ENCODE measurements at regions of chr13 and their contacts with region 1.

Region 1: GRCh38 chr13:27826379-27827353 is 34.4 kb downstream of the GSX1 start:
- DNase-seq: peak; percentile 64
- ATAC-seq: peak; percentile 96
- H3K4me3 ChIP-seq: peak overlapping the region; percentile 23 to 50
- H3K27ac ChIP-seq: 0 out of 2 replicates have a peak overlapping the region, but pooled peaks have one; percentile 2
- H3K4me1 ChIP-seq: peaks cover 6% of the 10 kb centered on the region
- H3K27me3 ChIP-seq: 0 out of 2 replicates have a peak, but pooled peaks cover 3% of the 10 kb centered on the region
- CTCF ChIP-seq: peak; percentile 89

Region 2: DNA sequence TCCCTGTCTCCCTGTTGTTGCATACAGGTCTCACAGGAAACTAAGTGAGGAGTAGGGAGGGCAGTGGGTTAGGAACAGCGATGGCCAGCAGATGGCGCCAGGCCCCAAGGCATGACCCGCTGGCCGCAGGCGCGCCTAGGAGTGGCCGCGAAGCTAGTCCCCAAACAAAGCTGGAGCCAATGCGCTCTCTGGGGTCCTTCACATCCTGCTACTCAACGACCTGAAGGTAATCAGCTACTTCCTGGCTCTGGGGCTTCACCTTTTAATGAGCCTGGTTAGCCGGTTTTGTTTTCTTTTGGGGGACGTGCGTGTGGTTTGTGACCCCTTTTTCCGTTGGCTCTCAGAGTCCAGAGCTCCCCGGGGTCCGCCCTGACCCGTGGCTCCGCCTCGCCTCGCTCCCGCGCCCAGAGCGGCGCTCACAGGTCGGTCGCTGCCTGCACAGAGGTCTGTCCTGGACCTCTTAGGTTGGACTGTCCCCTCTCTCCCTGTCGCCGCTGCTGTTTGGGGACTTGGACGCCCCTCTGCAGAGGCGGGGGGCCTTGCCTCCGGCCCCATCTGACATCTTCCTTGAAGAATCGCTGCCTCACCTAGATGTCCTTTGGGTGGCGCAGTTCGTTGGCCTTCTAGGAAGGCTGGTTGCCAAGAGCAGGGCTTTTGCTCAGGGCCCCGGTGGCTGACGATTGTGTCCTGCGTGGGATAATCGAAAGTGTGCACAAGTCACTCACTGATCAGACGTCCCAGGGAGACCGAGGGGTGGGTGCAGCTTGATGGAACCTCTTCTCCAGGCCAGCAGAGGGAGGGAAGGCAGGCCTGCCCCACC is 464.4 kb before region 1 on chr13:
- CTCF ChIA-PET with region 1: interaction called, 20 read pairs
- POLR2A ChIA-PET with region 1: no interaction called
- in situ Hi-C with region 1: no loop called
- intact Hi-C with region 1: no loop called
- DNase-seq: no peak
- ATAC-seq: peak; percentile 95
- H3K4me3 ChIP-seq: peak overlapping the region; percentile 50 to 77
- H3K27ac ChIP-seq: peak overlapping the region; percentile 68
- H3K4me1 ChIP-seq: peaks cover 28% of the 10 kb centered on the region
- H3K27me3 ChIP-seq: no peaks in the 10 kb centered on the region
- CTCF ChIP-seq: peak; percentile 91

Region 3: DNA sequence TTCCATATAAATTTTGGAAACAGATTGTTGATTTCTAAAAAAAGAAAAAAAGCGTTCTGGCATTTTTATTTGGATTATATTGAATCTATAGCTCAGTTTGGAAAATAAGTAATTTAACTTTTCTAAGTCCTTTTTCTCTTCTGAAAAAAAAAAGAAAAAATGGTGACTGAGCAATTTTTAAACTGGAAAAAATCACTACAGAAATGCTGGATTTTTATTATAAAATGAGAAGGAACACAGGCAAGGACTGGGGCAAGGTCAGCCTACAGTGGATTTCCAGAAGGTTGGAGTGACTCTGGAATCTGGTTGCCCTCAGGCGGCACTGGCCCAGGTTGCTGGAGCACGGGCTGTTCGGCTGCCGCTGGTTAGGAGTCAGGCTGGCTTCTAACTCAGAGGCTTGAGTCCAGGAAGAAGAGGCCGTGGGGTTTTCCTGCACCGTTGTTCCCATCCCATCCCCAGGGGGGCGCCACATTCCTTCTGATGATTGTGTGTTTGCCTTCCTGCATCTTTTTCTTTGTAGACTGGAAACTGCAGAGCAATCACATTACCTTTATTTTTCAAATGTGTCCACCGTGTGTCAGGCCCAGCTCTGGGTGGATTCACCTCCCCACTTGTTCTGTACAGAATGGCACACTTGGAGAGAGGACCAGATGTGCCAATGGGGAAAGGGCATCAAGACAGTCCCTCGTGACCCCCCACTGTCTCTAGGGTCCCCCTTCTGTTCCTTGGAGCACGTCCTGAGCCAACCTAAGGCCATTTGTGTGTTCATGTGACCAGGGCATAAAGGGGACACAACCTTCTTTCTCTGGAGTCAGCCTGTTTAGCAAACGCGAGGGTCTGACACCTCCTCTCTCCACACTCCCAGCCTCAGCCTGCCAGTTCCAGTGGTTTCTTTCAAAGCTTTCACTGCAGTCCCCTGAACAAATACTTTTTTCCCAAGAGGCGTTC is 446.7 kb before region 1 on chr13:
- CTCF ChIA-PET with region 1: no interaction called
- POLR2A ChIA-PET with region 1: no interaction called
- in situ Hi-C with region 1: no loop called
- intact Hi-C with region 1: loop called (anchors 5 kb)
- DNase-seq: no peak
- ATAC-seq: peak; percentile 77
- H3K4me3 ChIP-seq: no peak overlapping the region
- H3K27ac ChIP-seq: no peak overlapping the region
- H3K4me1 ChIP-seq: no peaks in the 10 kb centered on the region; the same call in 1 of the 2 replicates
- H3K27me3 ChIP-seq: no peaks in the 10 kb centered on the region
- CTCF ChIP-seq: peak; percentile 80

Region 4: DNA sequence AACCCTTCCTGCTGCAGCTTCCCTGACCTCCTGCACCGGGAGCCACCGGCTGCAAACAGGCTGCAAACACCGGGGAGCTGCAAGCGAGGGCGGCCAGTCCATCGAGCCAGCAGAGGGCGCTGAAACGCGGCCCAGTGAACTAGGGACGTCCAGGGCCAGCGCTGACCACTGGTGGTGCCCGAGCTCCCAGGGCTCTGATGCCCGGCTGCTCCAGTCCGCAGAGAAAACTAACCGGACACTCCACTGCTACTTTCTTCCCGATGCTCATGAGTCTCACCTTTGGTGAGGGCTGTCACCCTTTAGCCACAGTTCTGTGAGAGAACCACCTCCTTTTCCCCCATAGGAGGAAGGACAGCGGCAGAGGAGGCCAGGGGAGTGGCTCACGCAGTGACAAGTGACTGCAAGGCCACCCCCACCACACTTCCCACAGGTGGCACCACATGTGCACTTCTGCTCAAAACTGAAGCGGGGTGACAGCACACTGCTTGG is 293.5 kb before region 1 on chr13:
- CTCF ChIA-PET with region 1: interaction called, 8 read pairs
- POLR2A ChIA-PET with region 1: no interaction called
- in situ Hi-C with region 1: no loop called
- intact Hi-C with region 1: loop called (anchors 5 kb)
- DNase-seq: peak; percentile 20
- ATAC-seq: peak; percentile 99
- H3K4me3 ChIP-seq: peak overlapping the region; percentile 23 to 54; a peak in 3 of 4 replicates
- H3K27ac ChIP-seq: no peak overlapping the region
- H3K4me1 ChIP-seq: peaks cover 3% of the 10 kb centered on the region; the same call in 1 of the 2 replicates
- H3K27me3 ChIP-seq: no peaks in the 10 kb centered on the region
- CTCF ChIP-seq: peak; percentile 92

Region 5: DNA sequence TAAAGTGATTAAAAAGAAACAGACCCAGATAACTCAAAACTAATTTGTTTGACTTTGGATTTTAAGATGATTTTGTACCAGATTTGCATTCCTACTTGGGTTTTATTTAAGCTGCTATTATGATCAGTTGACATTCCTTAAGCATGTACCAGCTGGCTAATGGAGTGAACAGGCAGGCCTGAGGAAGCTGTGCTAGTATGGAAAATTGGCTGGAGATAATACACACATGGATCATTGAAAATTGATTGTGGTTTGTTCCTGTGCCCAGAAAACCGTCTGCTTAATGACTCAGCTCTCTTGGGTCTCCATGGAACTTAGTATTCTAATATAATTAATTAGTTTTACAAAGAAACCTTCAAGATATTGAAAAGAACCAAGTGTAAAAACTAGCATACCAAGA is 182.4 kb before region 1 on chr13:
- CTCF ChIA-PET with region 1: no interaction called
- POLR2A ChIA-PET with region 1: no interaction called
- in situ Hi-C with region 1: no loop called
- intact Hi-C with region 1: no loop called
- DNase-seq: no peak
- ATAC-seq: no peak
- H3K4me3 ChIP-seq: no peak overlapping the region
- H3K27ac ChIP-seq: no peak overlapping the region
- H3K4me1 ChIP-seq: no peaks in the 10 kb centered on the region
- H3K27me3 ChIP-seq: no peaks in the 10 kb centered on the region
- CTCF ChIP-seq: no peak

Region 6: GRCh38 chr13:27953676-27954405 is 127.2 kb after region 1 on chr13:
- CTCF ChIA-PET with region 1: interaction called, 24 read pairs
- POLR2A ChIA-PET with region 1: interaction called, 5 read pairs
- in situ Hi-C with region 1: loop called (anchors 25 kb)
- intact Hi-C with region 1: loop called (anchors 1 kb)
- DNase-seq: no peak
- ATAC-seq: peak; percentile 97
- H3K4me3 ChIP-seq: peak overlapping the region; percentile 52 to 66
- H3K27ac ChIP-seq: peak overlapping the region; percentile 67
- H3K4me1 ChIP-seq: peaks cover 9% of the 10 kb centered on the region
- H3K27me3 ChIP-seq: no peaks in the 10 kb centered on the region
- CTCF ChIP-seq: peak; percentile 96

Region 7: GRCh38 chr13:27960362-27961226 is 133.9 kb after region 1 on chr13:
- CTCF ChIA-PET with region 1: interaction called, 15 read pairs
- POLR2A ChIA-PET with region 1: no interaction called
- in situ Hi-C with region 1: loop called (anchors 25 kb)
- intact Hi-C with region 1: no loop called
- DNase-seq: no peak
- ATAC-seq: peak; percentile 90
- H3K4me3 ChIP-seq: peak overlapping the region; percentile 40 to 60
- H3K27ac ChIP-seq: peak overlapping the region; percentile 63; the same call in 1 of the 2 replicates
- H3K4me1 ChIP-seq: peaks cover 31% of the 10 kb centered on the region
- H3K27me3 ChIP-seq: no peaks in the 10 kb centered on the region
- CTCF ChIP-seq: peak; percentile 83

Region 8: GRCh38 chr13:27980280-27980998 is 153.8 kb after region 1 on chr13:
- CTCF ChIA-PET with region 1: interaction called, 12 read pairs
- POLR2A ChIA-PET with region 1: no interaction called
- in situ Hi-C with region 1: no loop called
- intact Hi-C with region 1: loop called (anchors 10 kb)
- DNase-seq: no peak
- ATAC-seq: no peak
- H3K4me3 ChIP-seq: no peak overlapping the region
- H3K27ac ChIP-seq: no peak overlapping the region
- H3K4me1 ChIP-seq: no peaks in the 10 kb centered on the region
- H3K27me3 ChIP-seq: no peaks in the 10 kb centered on the region
- CTCF ChIP-seq: no peak

Region 9: GRCh38 chr13:28451523-28452204 is 625.0 kb after region 1 on chr13:
- CTCF ChIA-PET with region 1: no interaction called
- POLR2A ChIA-PET with region 1: no interaction called
- in situ Hi-C with region 1: no loop called
- intact Hi-C with region 1: no loop called
- DNase-seq: no peak
- ATAC-seq: no peak
- H3K4me3 ChIP-seq: no peak overlapping the region
- H3K27ac ChIP-seq: no peak overlapping the region
- H3K4me1 ChIP-seq: no peaks in the 10 kb centered on the region
- H3K27me3 ChIP-seq: no peaks in the 10 kb centered on the region; the same call in 1 of the 2 replicates
- CTCF ChIP-seq: no peak